GM12878 (cell line): ENCODE measurements at regions of chr13 and their contacts with region 1.

Region 1: DNA sequence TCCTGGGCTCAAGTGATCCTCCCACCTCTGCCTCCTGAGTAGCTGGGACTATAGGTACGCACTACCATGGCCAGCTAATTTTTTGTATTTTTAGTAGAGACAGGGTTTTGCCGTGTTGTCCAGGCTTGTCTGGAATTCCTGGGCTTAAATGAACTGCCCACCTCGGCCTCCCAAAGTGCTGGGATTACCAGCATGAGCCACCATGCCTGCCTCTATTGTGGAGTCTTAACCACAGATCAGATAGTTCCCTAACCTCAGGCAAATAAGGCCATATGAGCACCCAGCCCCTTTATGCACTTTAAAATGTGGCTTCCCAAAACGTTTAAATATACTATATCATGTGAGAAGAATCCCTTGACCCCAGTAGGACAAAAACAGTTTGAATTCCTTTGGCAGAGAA is 16.4 kb downstream of the CNMD start:
- DNase-seq: no peak
- ATAC-seq: no peak
- H3K4me3 ChIP-seq: no peak overlapping the region
- H3K27ac ChIP-seq: no peak overlapping the region
- H3K4me1 ChIP-seq: no peaks in the 10 kb centered on the region
- H3K27me3 ChIP-seq: no peaks in the 10 kb centered on the region
- CTCF ChIP-seq: no peak
- EP300 ChIP-seq: no peak
- POLR2A ChIP-seq: no peak
- RAD21 ChIP-seq: no peak

Region 2: GRCh38 chr13:52652196-52652979 is 70.8 kb before region 1 on chr13 and contains the start of gene SUGT1:
- CTCF ChIA-PET with region 1: interaction called, 6 read pairs
- POLR2A ChIA-PET with region 1: interaction called, 9 read pairs
- RAD21 ChIA-PET with region 1: interaction called, 24 read pairs
- SMC1A ChIA-PET with region 1: interaction called, 26 read pairs
- in situ Hi-C with region 1: no loop called
- intact Hi-C with region 1: no loop called
- DNase-seq: peak; percentile 92
- ATAC-seq: peak; percentile 96
- H3K4me3 ChIP-seq: peak within 1 kb of the TSS; percentile 79
- H3K27ac ChIP-seq: peak within 1 kb of the TSS; percentile 94
- H3K4me1 ChIP-seq: no peaks in the 10 kb centered on the region; the same call in 1 of the 2 replicates
- H3K27me3 ChIP-seq: no peaks in the 10 kb centered on the region
- CTCF ChIP-seq: peak; percentile 55 to 81 (median 73)
- EP300 ChIP-seq: no peak
- POLR2A ChIP-seq: peak; percentile 79
- RAD21 ChIP-seq: no peak
- polyA plus RNA-seq, gene SUGT1: 82.5 to 85.6 TPM

Region 3: GRCh38 chr13:52665325-52665724 is 57.9 kb before region 1 on chr13:
- CTCF ChIA-PET with region 1: interaction called, 33 read pairs
- POLR2A ChIA-PET with region 1: no interaction called
- RAD21 ChIA-PET with region 1: interaction called, 64 read pairs
- SMC1A ChIA-PET with region 1: interaction called, 42 read pairs
- in situ Hi-C with region 1: no loop called
- intact Hi-C with region 1: no loop called
- DNase-seq: no peak
- ATAC-seq: peak; percentile 34
- H3K4me3 ChIP-seq: no peak overlapping the region
- H3K27ac ChIP-seq: no peak overlapping the region
- H3K4me1 ChIP-seq: peaks cover 3% of the 10 kb centered on the region; the same call in 1 of the 2 replicates
- H3K27me3 ChIP-seq: no peaks in the 10 kb centered on the region
- CTCF ChIP-seq: peak; percentile 38 to 53 (median 52); a peak in 4 of 6 replicates
- EP300 ChIP-seq: no peak
- POLR2A ChIP-seq: no peak
- RAD21 ChIP-seq: peak; percentile 60

Region 4: DNA sequence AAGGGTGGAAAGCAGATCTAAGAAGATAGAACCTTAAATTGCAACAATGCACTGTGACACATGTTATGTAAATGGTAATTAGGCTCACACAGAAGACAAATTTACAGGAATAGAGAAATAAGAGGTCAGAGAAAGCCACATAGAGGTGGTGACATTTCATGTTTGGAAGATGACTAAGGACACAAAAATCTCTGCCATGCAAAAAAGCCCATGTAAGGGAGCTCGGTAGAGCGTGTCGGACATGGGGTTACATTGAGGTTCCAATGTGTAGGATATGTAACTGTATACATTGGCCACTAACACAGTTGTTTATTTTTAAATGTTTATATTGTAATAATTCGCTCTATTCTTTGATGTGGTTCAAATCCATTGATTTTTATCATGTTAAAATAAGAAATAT is 36.8 kb before region 1 on chr13:
- CTCF ChIA-PET with region 1: interaction called, 26 read pairs
- POLR2A ChIA-PET with region 1: no interaction called
- RAD21 ChIA-PET with region 1: interaction called, 13 read pairs
- SMC1A ChIA-PET with region 1: interaction called, 40 read pairs
- in situ Hi-C with region 1: no loop called
- intact Hi-C with region 1: no loop called
- DNase-seq: no peak
- ATAC-seq: no peak
- H3K4me3 ChIP-seq: no peak overlapping the region
- H3K27ac ChIP-seq: no peak overlapping the region
- H3K4me1 ChIP-seq: no peaks in the 10 kb centered on the region
- H3K27me3 ChIP-seq: no peaks in the 10 kb centered on the region
- CTCF ChIP-seq: no peak
- EP300 ChIP-seq: no peak
- POLR2A ChIP-seq: no peak
- RAD21 ChIP-seq: no peak

Region 5: DNA sequence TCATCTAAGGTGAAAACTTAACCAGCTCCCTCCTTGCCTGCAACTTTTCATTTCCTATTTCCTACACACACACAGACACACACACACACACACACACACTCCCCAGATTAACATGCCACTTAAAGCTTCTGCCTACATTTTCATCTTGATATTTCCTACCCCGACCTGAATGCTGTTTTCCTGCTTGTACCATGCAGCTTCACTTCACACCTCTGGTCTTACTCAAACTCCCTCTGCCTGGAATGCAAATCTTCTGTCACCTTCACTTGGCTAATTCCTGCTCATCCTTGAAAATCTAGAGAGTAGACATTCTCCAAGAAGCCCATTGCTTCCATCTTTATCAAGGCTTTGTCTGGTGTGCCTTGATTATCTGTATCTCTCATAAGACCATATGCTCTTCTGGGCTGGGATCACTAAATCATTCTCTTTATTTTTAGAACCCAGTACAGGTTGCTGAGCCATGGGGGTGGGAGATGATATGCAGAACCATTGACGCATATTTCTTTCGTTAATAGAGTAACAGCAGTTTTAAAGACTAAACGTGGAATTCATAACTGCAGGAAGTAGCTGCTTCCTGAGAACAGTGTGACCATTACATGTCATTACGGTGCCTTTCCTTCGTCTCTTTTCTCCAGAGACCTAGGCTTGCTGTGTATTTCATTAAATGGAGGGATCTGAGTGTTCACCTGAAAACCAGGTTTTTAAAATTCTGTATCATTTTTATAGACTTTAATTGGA is 21.3 kb before region 1 on chr13:
- CTCF ChIA-PET with region 1: interaction called, 4 read pairs
- POLR2A ChIA-PET with region 1: interaction called, 5 read pairs
- RAD21 ChIA-PET with region 1: interaction called, 8 read pairs
- SMC1A ChIA-PET with region 1: interaction called, 20 read pairs
- in situ Hi-C with region 1: no loop called
- intact Hi-C with region 1: no loop called
- DNase-seq: no peak
- ATAC-seq: no peak
- H3K4me3 ChIP-seq: no peak overlapping the region
- H3K27ac ChIP-seq: no peak overlapping the region
- H3K4me1 ChIP-seq: no peaks in the 10 kb centered on the region
- H3K27me3 ChIP-seq: no peaks in the 10 kb centered on the region
- CTCF ChIP-seq: no peak
- EP300 ChIP-seq: no peak
- POLR2A ChIP-seq: no peak
- RAD21 ChIP-seq: no peak

Region 6: DNA sequence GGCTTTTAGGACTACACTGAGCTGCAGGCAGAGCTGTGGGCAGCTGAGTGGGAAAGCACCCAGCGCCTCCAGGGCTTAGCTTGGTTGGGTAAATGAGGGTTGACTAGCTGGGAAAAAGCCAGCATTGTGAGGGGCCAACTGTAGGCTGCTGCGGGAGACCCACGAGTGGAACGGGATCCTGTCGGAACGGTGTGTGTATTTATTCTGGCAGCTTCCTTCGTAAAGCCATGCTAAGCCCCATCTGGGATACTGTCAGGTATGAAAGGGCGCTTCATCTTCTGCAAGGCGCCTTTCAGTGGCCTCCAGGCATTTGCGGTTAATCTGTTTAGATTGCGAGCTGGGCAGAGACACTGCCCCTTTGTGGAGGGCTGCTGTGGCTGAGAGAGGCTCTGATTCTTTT is 55.9 kb after region 1 on chr13:
- CTCF ChIA-PET with region 1: interaction called, 4 read pairs
- POLR2A ChIA-PET with region 1: interaction called, 3 read pairs
- RAD21 ChIA-PET with region 1: interaction called, 9 read pairs
- SMC1A ChIA-PET with region 1: interaction called, 18 read pairs
- in situ Hi-C with region 1: no loop called
- intact Hi-C with region 1: no loop called
- DNase-seq: no peak
- ATAC-seq: peak; percentile 60
- H3K4me3 ChIP-seq: no peak overlapping the region
- H3K27ac ChIP-seq: no peak overlapping the region
- H3K4me1 ChIP-seq: no peaks in the 10 kb centered on the region
- H3K27me3 ChIP-seq: peaks cover 0 to 5% of the 10 kb centered on the region in 2 experiments; a peak in 1 of 4 replicates
- CTCF ChIP-seq: no peak
- EP300 ChIP-seq: no peak
- POLR2A ChIP-seq: no peak
- RAD21 ChIP-seq: no peak